ENCODE measurements at regions of chr7 and their contacts with region 1.

Region 1: DNA sequence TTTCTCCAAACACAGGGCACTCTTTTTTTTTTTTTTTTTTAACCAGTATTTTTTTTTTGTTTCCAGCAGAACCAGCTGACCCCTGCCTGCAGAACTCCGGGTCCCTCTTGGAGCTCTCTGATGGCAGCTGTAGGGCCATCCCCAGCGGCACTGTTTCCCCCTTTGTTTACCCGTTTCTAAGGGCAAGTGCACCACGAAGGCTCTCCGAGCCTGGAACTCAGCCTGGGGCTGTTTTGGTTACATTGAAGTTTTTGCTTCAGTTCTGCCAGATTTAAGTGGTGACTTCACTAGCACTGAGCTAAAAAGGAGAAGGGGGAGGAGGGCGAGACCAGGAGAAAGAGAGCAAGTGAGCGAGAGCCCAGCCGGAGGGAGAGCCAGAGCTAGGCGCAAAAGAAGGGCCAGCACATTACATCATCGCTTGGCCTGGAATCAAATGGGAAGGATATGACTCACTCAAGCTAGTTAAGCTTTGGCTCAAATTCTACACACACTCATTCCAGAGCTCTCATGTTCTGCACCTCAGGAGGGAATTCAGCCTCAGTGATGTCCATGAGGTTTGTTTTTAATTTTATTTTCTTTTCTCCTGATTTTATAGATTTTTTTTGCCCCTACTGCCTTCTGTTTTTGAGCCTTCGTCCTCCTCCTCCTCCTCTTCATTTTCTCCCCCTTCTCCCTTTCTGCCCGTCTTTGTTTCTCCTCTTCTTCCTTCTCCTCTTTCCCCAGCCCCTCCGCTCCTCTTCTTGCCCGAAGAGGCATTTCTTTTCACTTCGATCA is 272.3 kb downstream of the TRIL start:
- DNase-seq: peak; percentile 99
- H3K4me3 ChIP-seq: peak overlapping the region; percentile 45 to 94 (median 83)
- H3K27ac ChIP-seq: peak overlapping the region; percentile 97
- H3K4me1 ChIP-seq: peaks cover 29% of the 10 kb centered on the region
- H3K27me3 ChIP-seq: no peaks in the 10 kb centered on the region
- CTCF ChIP-seq: no peak
- POLR2A ChIP-seq: peak; percentile 75

Region 2: DNA sequence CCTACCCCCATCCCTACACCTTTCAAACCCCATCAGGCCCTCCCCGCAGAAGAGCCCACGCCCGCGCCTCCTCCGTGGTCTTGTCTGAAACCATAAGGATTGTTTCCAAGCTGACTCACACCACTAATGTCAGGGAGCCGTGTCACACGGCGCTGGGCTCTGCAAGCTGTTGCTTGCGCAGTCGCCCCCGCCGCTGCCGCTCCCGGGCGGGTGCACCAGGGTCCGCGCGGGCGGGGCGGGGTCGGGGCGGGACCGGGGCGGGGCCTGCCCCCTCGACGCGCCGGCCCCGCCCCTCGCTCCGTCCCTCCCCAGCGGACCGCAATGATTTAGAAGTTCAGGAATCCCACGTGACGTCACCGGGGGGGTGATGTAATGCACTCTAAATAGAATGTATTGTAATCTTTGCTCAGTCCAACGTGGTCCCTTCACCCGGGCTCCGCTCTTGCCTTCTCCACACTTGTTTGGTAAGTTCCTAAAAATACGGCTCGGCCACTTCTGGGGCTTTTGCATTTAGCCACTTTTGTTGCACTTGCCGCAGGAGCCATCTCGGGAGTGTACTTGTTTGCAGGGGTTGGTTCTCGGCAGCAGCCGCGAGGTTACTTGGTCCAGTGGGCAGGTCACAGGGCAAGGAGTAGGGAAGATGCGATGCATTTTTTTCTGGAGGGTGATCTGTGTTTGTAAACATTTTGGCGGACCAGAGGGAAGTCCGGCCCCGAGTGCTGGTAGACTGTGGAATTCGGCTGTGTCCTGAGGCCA is 276.7 kb before region 1 on chr7:
- CTCF ChIA-PET with region 1: interaction called, 4 read pairs
- POLR2A ChIA-PET with region 1: interaction called, 4 read pairs
- dilution Hi-C with region 1: no loop called
- intact Hi-C with region 1: loop called (anchors 1 kb)
- DNase-seq: peak; percentile 93
- H3K4me3 ChIP-seq: peak overlapping the region; percentile 51 to 87 (median 79)
- H3K27ac ChIP-seq: peak overlapping the region; percentile 63
- H3K4me1 ChIP-seq: peaks cover 15% of the 10 kb centered on the region
- H3K27me3 ChIP-seq: no peaks in the 10 kb centered on the region
- CTCF ChIP-seq: no peak
- POLR2A ChIP-seq: no peak

Region 3: GRCh38 chr7:28530175-28530802 is 155.5 kb before region 1 on chr7:
- CTCF ChIA-PET with region 1: no interaction called
- POLR2A ChIA-PET with region 1: no interaction called
- dilution Hi-C with region 1: no loop called
- intact Hi-C with region 1: loop called (anchors 1 kb)
- DNase-seq: peak; percentile 96
- H3K4me3 ChIP-seq: peak overlapping the region in 1 of 3 experiments; percentile 16
- H3K27ac ChIP-seq: peak overlapping the region; percentile 61
- H3K4me1 ChIP-seq: peaks cover 31% of the 10 kb centered on the region
- H3K27me3 ChIP-seq: no peaks in the 10 kb centered on the region
- CTCF ChIP-seq: no peak
- POLR2A ChIP-seq: peak; percentile 62

Region 4: GRCh38 chr7:28551331-28551730 is 134.5 kb before region 1 on chr7:
- CTCF ChIA-PET with region 1: no interaction called
- POLR2A ChIA-PET with region 1: no interaction called
- dilution Hi-C with region 1: no loop called
- intact Hi-C with region 1: no loop called
- DNase-seq: no peak
- H3K4me3 ChIP-seq: no peak overlapping the region
- H3K27ac ChIP-seq: no peak overlapping the region
- H3K4me1 ChIP-seq: no peaks in the 10 kb centered on the region
- H3K27me3 ChIP-seq: peaks cover 9 to 18% of the 10 kb centered on the region in 2 experiments
- CTCF ChIP-seq: no peak
- POLR2A ChIP-seq: no peak

Region 5: GRCh38 chr7:28631995-28632394 is 53.8 kb before region 1 on chr7:
- CTCF ChIA-PET with region 1: no interaction called
- POLR2A ChIA-PET with region 1: no interaction called
- dilution Hi-C with region 1: no loop called
- intact Hi-C with region 1: loop called (anchors 1 kb)
- DNase-seq: peak; percentile 90
- H3K4me3 ChIP-seq: no peak overlapping the region
- H3K27ac ChIP-seq: peak overlapping the region; percentile 56
- H3K4me1 ChIP-seq: peaks cover 12% of the 10 kb centered on the region
- H3K27me3 ChIP-seq: peaks cover 2 to 6% of the 10 kb centered on the region in 2 experiments
- CTCF ChIP-seq: no peak
- POLR2A ChIP-seq: no peak

Region 6: DNA sequence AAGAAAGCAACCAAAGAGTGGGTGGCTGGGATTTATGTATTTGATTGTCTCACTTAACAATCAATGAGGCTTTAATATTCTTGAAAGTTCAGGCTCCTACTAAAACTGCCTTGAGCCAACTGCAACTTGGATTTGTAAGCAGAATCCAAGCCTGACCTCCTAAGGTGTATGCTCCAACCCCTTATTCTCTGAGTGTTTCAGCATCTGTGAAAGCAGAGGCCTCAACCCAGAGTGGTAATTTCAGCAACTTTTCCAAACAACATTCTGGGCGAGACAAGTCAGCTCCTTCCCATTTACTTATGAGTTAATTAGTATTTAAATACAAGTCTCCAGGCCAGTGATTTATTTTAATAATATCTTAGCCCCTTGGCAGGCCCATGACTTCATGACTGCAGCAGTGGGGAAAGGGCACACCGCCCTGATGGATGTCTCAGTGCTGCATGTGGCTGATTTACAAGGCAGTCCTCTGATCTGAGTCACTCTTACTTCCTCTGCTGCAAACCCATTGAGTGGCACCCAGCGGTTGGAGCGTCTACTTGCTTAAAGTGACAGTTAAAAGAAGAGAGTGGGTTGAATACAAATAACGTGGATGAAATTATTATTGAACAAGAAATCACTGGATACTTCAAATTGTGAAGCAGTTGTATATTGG is 63.2 kb after region 1 on chr7:
- CTCF ChIA-PET with region 1: interaction called, 3 read pairs
- POLR2A ChIA-PET with region 1: no interaction called
- dilution Hi-C with region 1: no loop called
- intact Hi-C with region 1: loop called (anchors 1 kb)
- DNase-seq: peak; percentile 71
- H3K4me3 ChIP-seq: no peak overlapping the region
- H3K27ac ChIP-seq: no peak overlapping the region
- H3K4me1 ChIP-seq: peaks cover 11% of the 10 kb centered on the region
- H3K27me3 ChIP-seq: no peaks in the 10 kb centered on the region
- CTCF ChIP-seq: no peak
- POLR2A ChIP-seq: no peak

Region 7: GRCh38 chr7:28872226-28872625 is 186.4 kb after region 1 on chr7:
- CTCF ChIA-PET with region 1: no interaction called
- POLR2A ChIA-PET with region 1: no interaction called
- dilution Hi-C with region 1: no loop called
- intact Hi-C with region 1: no loop called
- DNase-seq: peak; percentile 46
- H3K4me3 ChIP-seq: no peak overlapping the region
- H3K27ac ChIP-seq: no peak overlapping the region
- H3K4me1 ChIP-seq: peaks cover 8% of the 10 kb centered on the region
- H3K27me3 ChIP-seq: peaks cover 0 to 2% of the 10 kb centered on the region in 2 experiments
- CTCF ChIP-seq: no peak
- POLR2A ChIP-seq: no peak